Posterior vena cava (tissue), 2 donors: ENCODE measurements at regions of chr12 and their contacts with region 1.

Region 1: DNA sequence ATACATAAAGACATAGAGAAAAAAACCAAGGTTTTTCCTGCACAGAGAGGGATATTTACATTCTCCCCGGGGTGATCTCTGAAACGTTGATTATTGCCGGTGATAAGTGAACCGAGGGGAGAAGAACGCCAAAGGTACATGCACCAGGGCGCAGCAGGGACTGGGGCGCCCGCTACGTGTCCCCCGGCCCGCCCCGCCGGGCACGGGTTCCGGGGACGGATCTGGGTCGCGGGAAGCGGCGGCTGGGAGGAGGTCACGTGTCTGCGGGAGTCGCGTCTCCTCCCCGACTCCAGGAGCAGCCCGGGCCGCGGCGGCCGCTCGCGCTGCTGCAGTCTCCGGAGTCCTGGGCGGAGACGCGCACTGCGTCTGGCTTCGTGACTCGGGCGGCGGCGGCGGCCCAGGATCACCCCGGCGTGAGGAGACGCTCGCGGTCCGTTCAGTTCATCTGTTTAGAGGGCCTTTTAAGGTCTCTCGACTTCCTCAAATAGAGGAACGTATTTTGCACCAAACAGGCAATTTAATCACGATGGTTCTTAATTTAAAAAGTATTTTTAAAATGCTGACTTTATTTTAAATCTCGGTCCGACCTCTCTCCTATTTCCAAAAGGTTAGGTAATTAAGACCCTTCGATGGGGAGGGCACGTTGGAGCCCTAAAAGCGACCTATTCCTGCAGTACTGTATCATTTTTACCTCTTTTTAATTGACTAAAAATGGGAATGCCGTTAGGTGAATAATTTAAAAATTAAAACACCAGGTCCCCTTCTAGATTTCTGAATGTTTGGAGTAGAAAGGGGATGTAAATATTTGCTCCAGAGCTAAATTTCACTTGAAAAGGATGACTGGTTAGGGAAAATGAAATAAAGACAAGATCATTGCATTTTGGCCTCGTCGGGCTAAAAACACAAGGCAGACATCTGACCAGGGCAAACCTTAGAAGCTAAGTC is 1.8 kb upstream of the BHLHE41 start:
- DNase-seq: peak; percentile 96

Region 2: GRCh38 chr12:26150736-26151450 is 24.3 kb after region 1 on chr12:
- intact Hi-C with region 1: loop called in 1 of 2 experiments (anchors 1 kb)
- DNase-seq: no peak

Region 3: GRCh38 chr12:26195641-26196420 is 69.2 kb after region 1 on chr12:
- intact Hi-C with region 1: loop called in 1 of 2 experiments (anchors 10 kb)
- DNase-seq: peak; percentile 83

Region 4: GRCh38 chr12:26274441-26275312 is 148.1 kb after region 1 on chr12:
- intact Hi-C with region 1: loop called in 1 of 2 experiments (anchors 10 kb)
- DNase-seq: peak; percentile 95

Region 5: DNA sequence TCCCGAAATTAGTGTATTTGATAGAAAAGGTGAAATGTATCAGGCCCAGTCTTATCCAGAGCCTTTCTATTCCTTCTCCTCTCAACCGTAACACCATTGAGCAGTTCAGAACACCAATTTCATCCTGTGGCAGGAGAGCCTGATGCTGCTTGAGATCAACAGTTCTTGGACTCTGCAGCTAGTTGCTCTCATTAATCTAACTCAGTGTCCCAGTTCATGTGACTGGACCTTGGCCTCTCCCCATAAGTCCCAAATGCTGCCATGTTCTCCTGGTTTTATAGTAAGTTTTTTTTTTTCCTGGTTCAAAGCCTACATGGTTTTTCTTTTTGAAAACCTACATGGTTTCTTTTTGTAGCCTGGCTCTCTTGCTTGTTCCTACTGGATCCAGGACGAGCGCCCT is 412.5 kb after region 1 on chr12:
- intact Hi-C with region 1: no loop called
- DNase-seq: no peak